Dendritic cell treated with granulocyte-macrophage colony-stimulating factor and Interleukin-4, amounts not matched to agents 40 ng/mL and 50 ng/mL, for 4 days (primary cell): ENCODE measurements at regions of chr3 and their contacts with region 1.

Region 1: GRCh38 chr3:50600841-50601591 is 10.6 kb downstream of the CISH start:
- H3K4me3 Mint-ChIP-seq: peak overlapping the region; percentile 33
- H3K27ac Mint-ChIP-seq: peak overlapping the region; percentile 99
- H3K4me1 Mint-ChIP-seq: peaks cover 83% of the 10 kb centered on the region
- H3K27me3 Mint-ChIP-seq: no peaks in the 10 kb centered on the region

Region 2: GRCh38 chr3:50587806-50588758 is 12.9 kb before region 1 on chr3:
- intact Hi-C with region 1: loop called (anchors 1 kb)
- H3K4me3 Mint-ChIP-seq: peak overlapping the region; percentile 35
- H3K27ac Mint-ChIP-seq: peak overlapping the region; percentile 98
- H3K4me1 Mint-ChIP-seq: peaks cover 96% of the 10 kb centered on the region
- H3K27me3 Mint-ChIP-seq: no peaks in the 10 kb centered on the region

Region 3: GRCh38 chr3:50617096-50617791 is 16.2 kb after region 1 on chr3 and contains the start of gene MAPKAPK3:
- intact Hi-C with region 1: no loop called
- H3K4me3 Mint-ChIP-seq: peak within 1 kb of the TSS; percentile 99
- H3K27ac Mint-ChIP-seq: peak within 1 kb of the TSS; percentile 98
- H3K4me1 Mint-ChIP-seq: peaks cover 76% of the 10 kb centered on the region
- H3K27me3 Mint-ChIP-seq: no peaks in the 10 kb centered on the region